Posterior vena cava (tissue), 2 donors: ENCODE measurements at regions of chr2 and their contacts with region 1.

Region 1: DNA sequence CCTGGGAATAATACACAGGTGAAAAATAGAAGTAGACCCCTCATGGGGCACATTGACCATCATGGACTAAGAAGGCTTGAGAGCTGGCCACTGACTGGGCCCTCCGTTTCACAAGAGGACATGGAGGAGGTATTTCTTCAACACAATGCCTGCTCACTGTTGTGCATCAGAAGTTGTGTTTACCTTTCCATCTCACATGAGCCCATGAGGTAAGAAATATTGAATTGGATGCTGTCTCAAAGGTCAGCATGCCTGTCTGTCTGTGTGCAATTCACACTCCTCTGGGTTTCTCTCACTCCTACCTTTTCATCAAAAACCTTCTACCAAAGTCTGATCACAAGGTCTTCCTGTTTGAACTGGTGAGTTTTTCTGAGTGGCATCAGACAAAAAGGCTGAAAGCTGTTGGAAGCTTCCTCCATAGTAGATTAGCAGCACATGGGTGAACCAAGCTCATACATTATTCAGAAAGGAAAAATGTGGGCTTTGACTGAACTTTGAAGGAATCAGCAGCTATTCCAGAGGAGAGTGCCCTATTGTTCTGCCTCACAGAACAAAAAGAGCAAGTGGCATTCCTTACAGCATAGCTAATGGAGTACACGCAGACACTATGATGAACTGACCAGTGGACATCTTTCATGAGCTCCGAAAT is 143.2 kb upstream of the RND3 start:
- DNase-seq: no peak

Region 2: DNA sequence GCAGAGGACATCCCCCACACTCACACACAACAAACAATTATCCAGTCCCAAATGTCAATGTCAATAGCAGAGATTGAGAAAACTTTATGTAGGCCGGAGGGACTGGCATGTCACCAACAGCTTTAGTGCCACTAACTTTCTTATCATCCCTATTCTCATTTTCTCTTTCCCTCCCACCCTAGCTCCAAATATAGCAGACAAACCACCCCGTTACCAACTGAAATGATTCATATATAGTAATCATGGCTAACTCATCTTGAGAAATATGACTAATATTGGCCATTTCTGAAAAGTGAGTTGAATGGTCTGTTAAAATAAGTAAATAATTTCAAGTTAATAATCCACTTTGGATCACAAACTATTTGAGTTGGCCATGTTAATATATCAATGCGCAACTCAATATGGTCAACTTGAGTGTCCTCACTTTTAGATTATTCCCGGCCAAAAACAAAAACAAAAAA is 98.8 kb after region 1 on chr2:
- intact Hi-C with region 1: loop called in 1 of 2 experiments (anchors 10 kb)
- DNase-seq: no peak

Region 3: DNA sequence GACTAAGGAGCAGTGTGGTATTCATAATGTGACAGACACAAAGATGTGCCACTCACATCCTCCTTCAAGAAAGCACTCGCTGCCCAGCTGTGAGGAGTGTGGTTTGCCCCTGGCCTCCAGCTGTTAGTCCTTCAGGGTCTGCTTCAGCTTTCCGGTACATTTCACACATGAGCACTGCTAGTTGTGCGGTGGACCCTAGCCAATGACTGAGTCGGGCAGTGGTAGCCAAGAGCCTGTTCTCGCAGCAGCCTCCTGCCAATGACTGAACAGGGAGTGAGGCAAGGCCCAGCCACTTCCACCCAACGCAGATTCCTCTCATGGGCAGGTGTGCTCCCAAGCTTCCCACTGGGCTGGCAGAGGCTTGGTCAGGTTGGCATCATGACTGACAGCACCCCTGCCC is 376.7 kb after region 1 on chr2:
- intact Hi-C with region 1: no loop called
- DNase-seq: peak; percentile 72